ENCODE measurements at regions of chrX and their contacts with region 1.

Region 1: GRCh38 chrX:136076942-136077341 is 70.4 kb upstream of the FHL1 start:
- DNase-seq: no peak
- ATAC-seq: no peak
- H3K4me3 ChIP-seq: no peak overlapping the region
- H3K27ac ChIP-seq: no peak overlapping the region
- H3K4me1 ChIP-seq: no peaks in the 10 kb centered on the region
- H3K27me3 ChIP-seq: no peaks in the 10 kb centered on the region
- CTCF ChIP-seq: no peak
- POLR2A ChIP-seq: no peak

Region 2: GRCh38 chrX:136130931-136131833 is 54.2 kb after region 1 on chrX:
- intact Hi-C with region 1: loop called in 1 of 2 experiments (anchors 10 kb)
- DNase-seq: no peak
- ATAC-seq: peak in 1 of 4 donors; percentile 31
- H3K4me3 ChIP-seq: no peak overlapping the region
- H3K27ac ChIP-seq: no peak overlapping the region
- H3K4me1 ChIP-seq: no peaks in the 10 kb centered on the region
- H3K27me3 ChIP-seq: no peaks in the 10 kb centered on the region
- CTCF ChIP-seq: no peak
- POLR2A ChIP-seq: no peak

Region 3: GRCh38 chrX:136477026-136477425 is 400.1 kb after region 1 on chrX:
- intact Hi-C with region 1: no loop called
- DNase-seq: no peak
- ATAC-seq: peak in 1 of 4 donors; percentile 39
- H3K4me3 ChIP-seq: no peak overlapping the region
- H3K27ac ChIP-seq: no peak overlapping the region
- H3K4me1 ChIP-seq: no peaks in the 10 kb centered on the region
- H3K27me3 ChIP-seq: no peaks in the 10 kb centered on the region
- CTCF ChIP-seq: peak in 1 of 4 donors; percentile 15
- POLR2A ChIP-seq: no peak

Measured in right lobe of liver (tissue), 6 donors.